Natural killer cell (primary cell): ENCODE measurements at regions of chr19 and their contacts with region 1.

Region 1: DNA sequence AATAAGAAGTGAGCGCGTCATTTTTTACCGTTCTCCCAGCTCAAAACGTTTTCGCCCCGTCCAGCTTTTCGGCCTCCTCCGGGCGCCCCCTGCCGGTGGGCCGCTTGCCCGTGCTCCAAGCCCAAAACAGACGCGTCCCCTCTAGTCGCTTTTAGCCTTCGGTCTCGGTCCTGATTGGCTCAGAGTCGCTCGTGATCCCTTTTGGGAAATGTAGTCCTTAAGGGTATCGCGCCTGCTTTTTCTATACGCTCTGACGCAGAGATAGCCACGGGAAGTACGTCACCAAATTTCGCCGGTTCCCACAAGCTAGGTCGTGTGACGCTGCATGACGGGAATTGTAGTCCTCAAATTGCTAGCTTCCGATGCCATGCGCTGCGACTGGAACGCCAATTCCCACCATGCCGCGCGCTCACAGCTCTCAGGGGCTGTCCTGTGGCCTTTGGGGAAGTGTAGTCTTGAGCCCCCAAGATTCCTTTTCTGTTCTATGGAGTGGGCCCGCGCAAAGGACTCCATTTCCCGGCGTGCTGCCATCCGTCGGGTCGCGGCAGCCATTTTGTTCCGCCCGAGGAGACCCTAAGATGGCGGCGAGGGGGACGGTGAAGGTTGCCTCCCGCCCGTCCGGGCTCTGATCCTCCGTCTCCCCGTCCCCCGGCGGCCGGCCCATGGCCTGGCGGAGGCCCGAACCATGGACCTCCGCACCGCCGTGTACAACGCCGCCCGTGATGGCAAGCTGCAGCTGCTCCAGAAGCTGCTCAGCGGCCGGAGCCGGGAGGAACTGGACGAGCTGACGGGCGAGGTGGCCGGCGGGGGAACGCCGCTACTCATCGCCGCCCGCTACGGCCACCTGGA is at the start of gene FEM1A:
- DNase-seq: peak; percentile 97 to 100
- ATAC-seq: peak; percentile 91 to 98 (median 91)
- H3K4me3 ChIP-seq: peak within 1 kb of the TSS; percentile 76
- H3K4me3 Mint-ChIP-seq: peak within 1 kb of the TSS; percentile 95
- H3K27ac ChIP-seq: peak within 1 kb of the TSS; percentile 84
- H3K27ac Mint-ChIP-seq: peak within 1 kb of the TSS; percentile 88
- H3K4me1 ChIP-seq: peaks cover 34% of the 10 kb centered on the region
- H3K4me1 Mint-ChIP-seq: peaks cover 6 to 21% of the 10 kb centered on the region in 2 donors
- H3K27me3 ChIP-seq: no peaks in the 10 kb centered on the region
- H3K27me3 Mint-ChIP-seq: no peaks in the 10 kb centered on the region
- CTCF ChIP-seq: peak; percentile 98
- total RNA-seq, gene FEM1A: 11.0 to 13.9 (median 13.7) TPM

Region 2: DNA sequence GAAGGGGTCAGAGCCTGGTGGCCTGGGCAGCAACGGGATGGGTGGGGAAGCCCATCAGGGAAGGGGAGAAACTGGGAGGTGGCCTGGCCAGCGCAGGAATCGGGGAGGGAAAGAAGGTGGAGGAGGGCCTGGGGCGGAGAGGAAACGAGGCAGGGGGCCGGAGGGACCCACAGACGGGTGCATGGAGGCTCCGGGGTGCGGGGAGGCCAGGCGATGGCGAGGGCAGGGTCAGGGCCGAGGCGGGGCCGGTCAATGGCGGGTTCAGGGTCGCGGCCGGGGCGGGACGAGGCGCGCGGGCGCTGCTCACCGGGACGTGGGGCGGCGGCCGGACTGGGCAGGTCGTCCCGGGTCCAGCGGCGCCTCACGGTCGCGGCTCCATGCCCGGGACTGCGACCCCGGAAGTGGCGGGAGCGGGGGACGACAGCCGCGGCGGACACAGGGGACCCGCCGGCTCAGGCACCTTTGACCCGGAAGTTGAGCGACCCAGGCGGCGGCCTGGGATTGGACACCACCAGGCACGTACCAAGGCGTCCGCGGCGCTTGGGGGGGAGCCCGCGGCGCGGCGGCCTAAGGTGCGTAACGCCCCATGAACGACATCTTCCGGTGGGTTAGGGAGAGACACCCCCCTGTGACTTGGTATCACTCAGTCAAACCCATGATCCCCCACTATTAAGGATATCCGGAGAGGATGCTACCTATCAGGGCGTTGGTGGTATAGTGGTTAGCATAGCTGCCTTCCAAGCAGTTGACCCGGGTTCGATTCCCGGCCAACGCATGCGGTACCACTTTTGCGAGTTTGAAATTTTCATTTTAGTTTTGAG is 67.8 kb before region 1 on chr19 and contains the start of gene DPP9:
- intact Hi-C with region 1: loop called (anchors 1 kb)
- DNase-seq: peak; percentile 91 to 99
- ATAC-seq: peak; percentile 94 to 99 (median 94)
- H3K4me3 ChIP-seq: peak within 1 kb of the TSS; percentile 98
- H3K4me3 Mint-ChIP-seq: peak within 1 kb of the TSS; percentile 95
- H3K27ac ChIP-seq: peak within 1 kb of the TSS; percentile 77
- H3K27ac Mint-ChIP-seq: peak within 1 kb of the TSS; percentile 98
- H3K4me1 ChIP-seq: peaks cover 34% of the 10 kb centered on the region
- H3K4me1 Mint-ChIP-seq: peaks cover 32 to 55% of the 10 kb centered on the region in 2 donors
- H3K27me3 ChIP-seq: no peaks in the 10 kb centered on the region
- H3K27me3 Mint-ChIP-seq: peaks cover 0 to 3% of the 10 kb centered on the region in 2 donors
- CTCF ChIP-seq: no peak
- total RNA-seq, gene DPP9: 133 to 183 (median 165) TPM

Region 3: GRCh38 chr19:4732680-4733114 is 58.7 kb before region 1 on chr19:
- intact Hi-C with region 1: loop called (anchors 1 kb)
- DNase-seq: peak in 1 of 2 donors; percentile 80
- ATAC-seq: peak; percentile 80 to 95 (median 93)
- H3K4me3 ChIP-seq: no peak overlapping the region
- H3K4me3 Mint-ChIP-seq: no peak overlapping the region
- H3K27ac ChIP-seq: no peak overlapping the region
- H3K27ac Mint-ChIP-seq: peak overlapping the region in 1 of 2 donors; percentile 52
- H3K4me1 ChIP-seq: peaks cover 3% of the 10 kb centered on the region
- H3K4me1 Mint-ChIP-seq: peaks cover 5 to 15% of the 10 kb centered on the region in 2 donors
- H3K27me3 ChIP-seq: no peaks in the 10 kb centered on the region
- H3K27me3 Mint-ChIP-seq: peaks cover 0 to 3% of the 10 kb centered on the region in 2 donors
- CTCF ChIP-seq: peak; percentile 66

Region 4: DNA sequence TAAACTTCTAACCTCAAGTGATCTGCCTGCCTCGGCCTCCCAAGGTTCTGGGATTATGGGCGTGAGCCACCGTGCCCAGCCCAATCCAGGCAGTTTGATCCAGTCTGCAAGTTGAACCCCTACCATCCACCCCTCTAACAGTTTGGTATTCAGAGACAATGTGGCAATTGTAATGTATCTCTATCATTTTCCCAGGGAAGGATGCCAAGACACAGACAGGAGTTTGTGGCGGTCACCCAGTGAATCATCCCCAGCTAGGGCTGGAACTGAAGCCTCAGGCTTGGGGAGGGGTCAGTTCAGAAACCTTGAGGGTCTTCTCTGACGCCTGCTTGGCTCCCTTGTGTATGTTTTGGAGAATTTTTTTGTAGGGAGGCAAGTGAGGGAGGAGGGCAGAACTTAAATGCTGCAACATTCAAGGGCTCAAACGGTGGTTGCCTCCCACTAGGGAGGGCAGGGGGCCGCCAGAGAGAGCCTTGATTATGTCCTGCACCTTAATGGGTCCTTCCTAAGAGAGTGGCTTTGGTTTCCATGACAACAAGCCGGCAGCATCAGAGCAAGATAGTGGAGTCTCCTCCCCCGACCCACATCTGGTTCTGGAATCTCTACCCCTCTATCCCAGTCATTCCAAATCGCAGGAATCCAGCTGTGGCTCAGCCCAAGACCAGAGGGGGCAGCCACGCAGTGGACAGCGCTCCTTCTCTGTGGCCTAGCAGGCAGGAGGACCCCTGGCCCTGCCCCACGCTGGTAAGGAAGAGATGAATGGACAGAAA is 14.8 kb before region 1 on chr19:
- intact Hi-C with region 1: no loop called
- DNase-seq: no peak
- ATAC-seq: no peak
- H3K4me3 ChIP-seq: no peak overlapping the region
- H3K4me3 Mint-ChIP-seq: no peak overlapping the region
- H3K27ac ChIP-seq: no peak overlapping the region
- H3K27ac Mint-ChIP-seq: no peak overlapping the region
- H3K4me1 ChIP-seq: no peaks in the 10 kb centered on the region
- H3K4me1 Mint-ChIP-seq: no peaks in the 10 kb centered on the region
- H3K27me3 ChIP-seq: no peaks in the 10 kb centered on the region
- H3K27me3 Mint-ChIP-seq: peaks cover 14 to 15% of the 10 kb centered on the region in 2 donors
- CTCF ChIP-seq: no peak

Region 5: DNA sequence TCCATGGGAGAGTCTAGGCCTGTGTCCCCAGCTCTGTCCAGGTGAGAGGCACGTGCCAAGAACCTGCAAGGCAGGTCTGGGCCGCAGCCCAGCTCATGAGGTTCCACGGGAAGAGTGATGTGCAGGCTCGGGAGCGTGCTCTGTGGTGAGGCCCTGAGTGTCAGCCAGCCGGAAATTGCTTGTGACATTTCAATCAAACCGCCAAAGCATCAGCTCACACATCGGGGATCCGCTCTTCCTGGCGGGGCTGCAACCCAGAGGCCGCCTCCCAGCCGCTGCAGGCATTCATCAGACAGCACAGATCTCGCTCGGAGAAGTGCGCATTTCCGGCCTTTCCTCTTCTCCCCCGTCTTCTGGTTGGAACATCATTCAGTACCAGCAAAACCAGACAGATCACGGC is 286.8 kb after region 1 on chr19:
- intact Hi-C with region 1: no loop called
- DNase-seq: peak in 1 of 2 donors; percentile 69
- ATAC-seq: peak; percentile 22 to 65 (median 58)
- H3K4me3 ChIP-seq: no peak overlapping the region
- H3K4me3 Mint-ChIP-seq: no peak overlapping the region
- H3K27ac ChIP-seq: peak overlapping the region; percentile 35
- H3K27ac Mint-ChIP-seq: peak overlapping the region; percentile 65 to 73
- H3K4me1 ChIP-seq: peaks cover 54% of the 10 kb centered on the region
- H3K4me1 Mint-ChIP-seq: peaks cover 45 to 49% of the 10 kb centered on the region in 2 donors
- H3K27me3 ChIP-seq: no peaks in the 10 kb centered on the region
- H3K27me3 Mint-ChIP-seq: no peaks in the 10 kb centered on the region
- CTCF ChIP-seq: no peak